Head of caudate nucleus (tissue), 42 donors: ENCODE measurements at regions of chr5 and their contacts with region 1.

Region 1: DNA sequence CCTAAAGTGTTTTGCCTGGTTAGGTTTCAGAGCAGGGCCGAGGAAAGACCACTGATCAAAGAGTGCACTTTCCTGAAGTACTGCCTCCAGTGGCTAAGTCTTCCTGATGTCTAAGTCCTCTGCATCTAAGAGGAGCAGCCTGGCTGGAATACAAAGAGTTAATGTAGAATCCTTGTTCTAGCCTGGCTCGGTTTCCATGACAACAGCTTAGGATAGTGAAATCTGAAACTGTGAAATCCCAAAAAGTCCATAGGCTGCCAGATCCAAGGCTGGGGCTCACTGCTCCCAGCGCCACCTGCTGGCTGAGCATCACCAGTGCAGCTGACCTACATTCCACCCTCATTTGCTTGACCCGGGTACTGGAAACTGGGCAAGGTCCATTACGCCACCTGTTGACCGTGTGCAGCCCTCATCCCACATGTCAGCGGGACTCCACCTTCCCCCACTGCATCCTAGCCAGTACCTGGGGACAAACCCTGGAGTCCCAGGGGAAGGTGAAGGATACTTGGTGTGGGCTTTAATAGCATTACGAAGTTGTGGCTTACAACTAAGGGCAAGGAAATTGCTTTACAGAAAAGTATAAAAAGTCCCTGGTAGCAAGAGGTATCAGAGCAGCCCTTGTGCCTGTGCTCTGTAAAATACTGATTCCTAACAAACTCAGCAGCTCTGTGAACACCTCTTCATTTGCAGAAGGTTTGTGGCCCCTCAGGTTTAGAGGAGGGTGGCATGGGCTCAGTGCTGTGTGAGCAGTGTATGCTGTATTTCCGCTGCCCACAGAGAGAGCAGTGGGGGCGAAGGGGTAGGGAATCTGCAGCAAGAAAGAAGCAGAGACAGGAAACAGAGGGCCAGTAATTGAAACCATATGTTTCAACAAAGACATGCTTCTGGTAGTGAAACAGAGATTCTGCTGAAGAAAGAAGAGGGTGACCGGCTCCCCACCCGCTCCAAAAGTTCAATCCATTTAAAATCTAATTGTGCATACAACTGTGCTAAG is 36.0 kb downstream of the PCDHGC5 start:
- DNase-seq: peak; percentile 58 to 94 (median 83)

Region 2: DNA sequence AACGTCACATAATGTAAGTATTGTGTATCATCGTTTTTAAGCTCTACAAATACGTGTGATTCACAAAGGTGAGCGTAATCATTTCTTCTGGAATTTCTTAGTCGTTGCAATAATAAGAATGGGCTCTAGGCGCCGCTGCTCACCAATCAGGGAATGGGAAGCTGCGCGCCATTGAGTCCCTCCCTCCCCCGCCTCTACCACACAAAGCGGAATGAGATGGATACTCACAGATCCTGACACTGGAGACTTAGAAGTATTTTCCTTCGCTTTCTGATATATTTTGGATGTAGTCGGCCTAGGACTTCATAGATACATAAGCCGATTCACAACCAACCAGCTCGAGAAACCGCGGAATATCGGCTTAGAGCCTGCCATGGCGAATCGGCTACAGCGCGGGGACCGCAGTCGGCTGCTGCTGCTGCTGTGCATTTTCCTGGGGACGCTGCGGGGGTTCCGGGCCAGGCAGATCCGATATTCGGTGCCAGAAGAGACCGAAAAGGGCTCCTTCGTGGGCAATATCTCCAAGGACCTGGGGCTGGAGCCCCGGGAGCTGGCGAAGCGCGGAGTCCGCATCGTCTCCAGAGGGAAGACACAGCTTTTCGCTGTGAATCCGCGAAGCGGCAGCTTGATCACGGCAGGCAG is 103.9 kb before region 1 on chr5 and contains the start of gene PCDHGA11:
- intact Hi-C with region 1: loop called (anchors 10 kb)
- DNase-seq: peak in 4 of 42 donors; percentile 30 to 55 (median 45)

Region 3: GRCh38 chr5:141585594-141585993 is 60.7 kb after region 1 on chr5:
- intact Hi-C with region 1: no loop called
- DNase-seq: no peak